ENCODE measurements at regions of chr11 and their contacts with region 1.

Region 1: GRCh38 chr11:120108154-120108865 is 29.6 kb downstream of the TRIM29 start:
- DNase-seq: peak; percentile 8
- H3K4me3 ChIP-seq: no peak overlapping the region
- H3K27ac ChIP-seq: no peak overlapping the region
- H3K27me3 ChIP-seq: peaks cover 46% of the 10 kb centered on the region
- CTCF ChIP-seq: peak; percentile 99

Region 2: DNA sequence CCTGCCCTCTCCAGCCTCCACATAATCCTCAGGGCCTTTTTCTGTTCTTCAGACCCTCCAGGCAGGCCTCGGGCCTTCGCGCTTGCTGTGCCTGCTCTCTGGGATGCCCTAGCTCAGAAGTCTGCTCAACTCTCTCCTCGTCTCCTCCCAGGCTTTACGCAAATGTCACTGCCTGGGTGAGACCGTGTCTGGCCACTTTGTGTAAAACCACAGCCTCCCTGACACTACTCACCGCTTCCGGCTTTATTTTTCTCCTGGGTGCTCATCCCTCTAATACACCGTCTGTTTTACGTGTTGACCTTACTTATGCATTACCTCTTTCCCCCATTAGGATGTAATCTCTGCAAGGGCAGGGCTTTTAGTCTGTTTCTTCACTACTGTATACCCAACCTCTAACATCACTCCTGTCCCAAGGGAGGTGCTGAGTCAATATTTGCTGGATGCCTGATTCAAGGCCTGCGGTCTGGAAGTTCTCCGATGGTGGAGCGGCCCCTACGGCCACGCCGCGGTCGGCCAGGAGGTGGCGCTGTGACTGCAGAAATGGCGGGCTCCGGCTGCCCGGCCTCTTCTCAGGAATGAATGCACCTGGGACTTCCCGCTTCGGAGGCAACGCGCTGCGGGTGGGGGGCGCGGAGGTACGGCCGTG is 627.2 kb before region 1 on chr11:
- CTCF ChIA-PET with region 1: interaction called, 18 read pairs
- POLR2A ChIA-PET with region 1: no interaction called
- DNase-seq: peak; percentile 65
- H3K4me3 ChIP-seq: no peak overlapping the region
- H3K27ac ChIP-seq: no peak overlapping the region
- H3K27me3 ChIP-seq: peaks cover 37% of the 10 kb centered on the region
- CTCF ChIP-seq: peak; percentile 96

Region 3: DNA sequence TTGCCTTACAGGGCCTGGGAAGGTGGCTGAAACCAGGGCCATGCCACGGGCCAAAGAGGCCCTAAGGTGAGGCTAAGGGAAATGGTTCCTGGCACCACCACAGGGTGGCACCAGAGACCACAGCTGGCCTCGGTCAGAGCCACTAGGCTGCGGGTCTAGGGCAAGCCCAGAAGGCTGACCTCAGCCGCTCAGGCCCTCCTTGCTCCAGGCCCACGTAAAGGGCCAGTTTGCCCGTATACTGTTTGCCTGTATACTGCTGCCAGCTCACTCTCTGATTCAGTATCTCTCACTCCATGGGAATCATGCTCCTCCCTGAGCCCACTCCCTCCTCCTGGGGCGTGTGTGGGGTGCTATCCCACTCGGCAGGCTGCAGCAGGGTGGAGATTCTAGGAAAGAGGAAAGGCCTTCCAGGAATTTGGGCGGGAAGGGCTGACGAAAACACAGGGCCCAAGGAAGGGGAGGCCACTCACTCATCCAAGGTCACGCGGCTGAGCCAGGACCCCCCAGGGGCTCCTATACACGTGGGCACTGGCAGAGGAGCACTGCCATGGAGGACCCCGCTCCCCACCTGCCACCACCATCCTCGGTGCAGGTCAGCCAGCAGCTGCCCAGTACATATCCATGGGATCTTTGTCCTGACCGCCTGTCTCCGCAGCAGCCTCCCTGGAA is 441.7 kb before region 1 on chr11:
- CTCF ChIA-PET with region 1: interaction called, 33 read pairs
- POLR2A ChIA-PET with region 1: no interaction called
- DNase-seq: peak; percentile 10
- H3K4me3 ChIP-seq: no peak overlapping the region
- H3K27ac ChIP-seq: no peak overlapping the region
- H3K27me3 ChIP-seq: no peaks in the 10 kb centered on the region
- CTCF ChIP-seq: peak; percentile 95